Activated CD8-positive, alpha-beta memory T cell treated with anti-CD3 and anti-CD28 coated beads, Interleukin-2, amount 10 ng/mL, durations not matched to agents 7 days and 5 days (primary cell): ENCODE measurements at regions of chr14 and their contacts with region 1.

Region 1: GRCh38 chr14:91396959-91397815 is 20.4 kb downstream of the CCDC88C start:
- DNase-seq: peak; percentile 87
- ATAC-seq: peak; percentile 77
- H3K4me3 Mint-ChIP-seq: peak overlapping the region; percentile 99
- H3K27ac Mint-ChIP-seq: peak overlapping the region; percentile 82
- H3K4me1 Mint-ChIP-seq: peaks cover 85% of the 10 kb centered on the region
- H3K27me3 Mint-ChIP-seq: no peaks in the 10 kb centered on the region

Region 2: GRCh38 chr14:91317381-91318308 is 79.5 kb before region 1 on chr14:
- CTCF ChIA-PET with region 1: interaction called, 46 read pairs
- DNase-seq: peak; percentile 91
- ATAC-seq: peak; percentile 60
- H3K4me3 Mint-ChIP-seq: peak overlapping the region; percentile 51
- H3K27ac Mint-ChIP-seq: peak overlapping the region; percentile 96
- H3K4me1 Mint-ChIP-seq: peaks cover 78% of the 10 kb centered on the region
- H3K27me3 Mint-ChIP-seq: no peaks in the 10 kb centered on the region

Region 3: DNA sequence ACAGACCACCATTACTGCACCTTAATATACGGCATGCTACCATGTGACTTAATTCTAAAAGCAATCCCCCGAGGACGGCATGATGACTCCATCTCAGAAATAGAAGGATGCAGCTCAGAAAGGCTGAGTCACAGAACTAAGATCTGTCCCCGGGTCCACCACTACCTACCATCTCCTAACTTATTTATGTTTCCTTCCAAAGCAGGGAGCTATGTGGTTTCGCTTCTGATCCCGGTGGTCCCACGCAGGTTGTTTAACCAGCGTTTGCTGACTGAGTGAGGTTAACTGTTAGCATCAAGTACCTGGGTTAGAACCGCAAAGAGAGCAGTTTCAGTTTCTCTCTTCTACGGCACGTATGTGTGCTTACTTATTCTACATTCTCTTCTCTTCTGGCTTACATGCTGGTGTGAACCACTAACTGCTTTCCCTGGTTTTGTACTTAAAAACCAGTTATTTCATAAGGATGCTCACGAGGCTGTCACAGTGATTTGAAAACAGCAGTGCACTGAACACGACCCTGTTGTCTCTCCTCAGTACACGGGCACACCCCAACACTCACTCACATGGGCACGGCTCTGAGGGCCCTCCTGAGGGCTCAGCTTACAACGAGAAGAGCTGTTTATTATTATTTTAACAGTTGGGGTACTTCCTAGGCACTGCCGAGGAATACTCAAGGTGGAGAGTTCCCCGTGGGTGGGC is 46.2 kb before region 1 on chr14:
- CTCF ChIA-PET with region 1: interaction called, 63 read pairs
- DNase-seq: peak; percentile 90
- ATAC-seq: peak; percentile 74
- H3K4me3 Mint-ChIP-seq: peak overlapping the region; percentile 71
- H3K27ac Mint-ChIP-seq: peak overlapping the region; percentile 97
- H3K4me1 Mint-ChIP-seq: peaks cover 96% of the 10 kb centered on the region
- H3K27me3 Mint-ChIP-seq: no peaks in the 10 kb centered on the region

Region 4: GRCh38 chr14:91373591-91374254 is 23.5 kb before region 1 on chr14:
- CTCF ChIA-PET with region 1: interaction called, 41 read pairs
- DNase-seq: peak; percentile 81
- ATAC-seq: peak; percentile 57
- H3K4me3 Mint-ChIP-seq: peak overlapping the region; percentile 70
- H3K27ac Mint-ChIP-seq: peak overlapping the region; percentile 96
- H3K4me1 Mint-ChIP-seq: peaks cover 100% of the 10 kb centered on the region
- H3K27me3 Mint-ChIP-seq: no peaks in the 10 kb centered on the region

Region 5: DNA sequence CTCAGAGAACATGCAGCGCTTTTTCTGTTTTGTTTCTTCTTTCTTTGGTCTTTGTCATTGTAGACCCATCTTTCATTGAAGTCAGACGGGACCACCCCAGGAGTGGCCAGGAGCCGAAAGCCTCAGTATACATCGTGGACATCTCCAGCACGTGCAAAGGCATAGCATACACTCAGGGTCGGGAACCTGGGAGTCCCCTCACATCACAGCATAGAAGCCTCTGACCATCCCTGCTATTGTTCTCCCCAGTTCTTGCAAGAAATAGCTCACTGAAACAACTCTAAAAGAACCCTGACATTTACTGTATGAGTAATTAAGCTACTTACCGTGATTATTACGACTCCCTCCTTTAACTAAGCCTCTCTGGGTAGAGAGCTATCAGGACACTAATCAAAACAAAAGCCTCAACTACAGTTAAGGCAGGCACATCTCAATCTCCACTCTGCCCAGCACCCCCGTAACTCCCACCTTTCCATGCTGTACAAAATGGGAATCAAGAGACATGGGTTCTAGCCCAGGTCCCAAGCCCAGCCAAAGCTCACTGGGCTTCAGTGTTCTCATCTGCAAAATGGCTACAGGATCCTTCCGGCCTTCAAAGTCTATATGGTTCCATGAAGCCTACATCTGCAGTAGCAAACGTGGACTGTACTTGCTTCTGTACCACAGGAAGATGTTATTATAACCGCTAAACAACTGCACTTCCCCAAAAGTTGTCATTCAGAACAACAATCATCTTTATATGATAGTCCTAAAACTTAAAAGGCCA is 13.8 kb after region 1 on chr14:
- CTCF ChIA-PET with region 1: interaction called, 117 read pairs
- DNase-seq: no peak
- ATAC-seq: peak; percentile 14
- H3K4me3 Mint-ChIP-seq: peak overlapping the region; percentile 74
- H3K27ac Mint-ChIP-seq: peak overlapping the region; percentile 95
- H3K4me1 Mint-ChIP-seq: peaks cover 88% of the 10 kb centered on the region
- H3K27me3 Mint-ChIP-seq: no peaks in the 10 kb centered on the region

Region 6: GRCh38 chr14:91418387-91419043 is 21.3 kb after region 1 on chr14:
- CTCF ChIA-PET with region 1: interaction called, 117 read pairs
- DNase-seq: peak; percentile 88
- ATAC-seq: peak; percentile 23
- H3K4me3 Mint-ChIP-seq: peak overlapping the region; percentile 68
- H3K27ac Mint-ChIP-seq: peak overlapping the region; percentile 75
- H3K4me1 Mint-ChIP-seq: peaks cover 28% of the 10 kb centered on the region
- H3K27me3 Mint-ChIP-seq: peaks cover 5% of the 10 kb centered on the region